ENCODE measurements at regions of chr1 and their contacts with region 1.

Region 1: DNA sequence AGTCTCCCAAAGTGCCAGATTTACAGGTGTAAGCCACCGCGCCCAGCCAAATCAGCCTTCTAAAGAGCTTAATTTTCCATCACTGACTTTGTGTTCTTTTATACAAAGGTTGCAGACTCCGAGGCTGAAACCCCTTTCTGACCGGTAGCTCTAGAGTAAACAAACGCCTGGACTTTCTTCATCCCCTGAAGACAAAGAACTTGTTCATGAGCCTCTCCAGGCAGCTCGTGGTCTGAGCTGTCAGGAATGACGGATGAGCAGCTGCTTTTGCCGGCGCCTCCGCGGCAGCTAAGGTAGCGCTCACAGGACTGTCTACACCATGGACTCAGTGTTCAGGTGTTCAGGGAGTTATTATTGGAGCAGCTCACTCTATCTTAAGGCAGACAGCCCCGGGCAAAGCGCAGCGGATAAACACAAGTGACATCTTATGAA is 128.5 kb upstream of the ERRFI1 start:
- DNase-seq: peak; percentile 99
- ATAC-seq: peak; percentile 97
- H3K4me3 ChIP-seq: peak overlapping the region in 2 of 3 experiments; percentile 15 to 31; a peak in 2 of 6 replicates
- H3K27ac ChIP-seq: peak overlapping the region; percentile 88
- H3K4me1 ChIP-seq: peaks cover 82% of the 10 kb centered on the region
- H3K27me3 ChIP-seq: no peaks in the 10 kb centered on the region
- CTCF ChIP-seq: no peak
- EP300 ChIP-seq: peak; percentile 89 to 97; a peak in 3 of 4 replicates
- POLR2A ChIP-seq: peak in 1 of 2 experiments; percentile 16; a peak in 1 of 4 replicates
- RAD21 ChIP-seq: peak; percentile 44; the same call in 1 of the 2 replicates

Region 2: DNA sequence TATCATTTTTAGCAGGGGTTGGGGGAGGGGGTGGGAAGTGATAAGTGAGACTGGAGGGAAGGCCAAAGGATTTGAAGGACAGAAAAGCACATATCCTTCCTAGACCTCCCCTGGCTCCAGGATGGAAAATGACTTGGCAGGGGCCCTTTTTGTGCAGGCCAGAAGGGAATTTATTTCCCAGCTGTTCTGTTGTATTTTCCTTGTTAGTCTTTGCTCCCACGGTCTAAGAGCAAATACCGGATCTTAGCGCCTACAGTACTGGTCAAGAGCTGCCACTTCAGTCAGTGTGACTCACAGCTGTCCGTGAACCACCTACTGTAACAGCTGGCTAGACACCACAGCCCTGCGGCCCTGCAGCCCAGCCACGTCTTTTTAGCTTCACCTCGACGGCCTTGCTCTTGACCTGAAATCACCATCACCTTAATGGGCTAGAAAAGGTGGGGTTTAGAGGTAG is 77.5 kb before region 1 on chr1:
- CTCF ChIA-PET with region 1: no interaction called
- POLR2A ChIA-PET with region 1: interaction called, 14 read pairs
- in situ Hi-C with region 1: no loop called
- intact Hi-C with region 1: no loop called
- DNase-seq: peak; percentile 93
- ATAC-seq: peak; percentile 99
- H3K4me3 ChIP-seq: peak overlapping the region; percentile 36 to 50 (median 47); a peak in 5 of 6 replicates
- H3K27ac ChIP-seq: peak overlapping the region; percentile 57
- H3K4me1 ChIP-seq: peaks cover 89% of the 10 kb centered on the region
- H3K27me3 ChIP-seq: no peaks in the 10 kb centered on the region
- CTCF ChIP-seq: 0 out of 2 replicates have a peak, but pooled peaks have one; percentile 10
- EP300 ChIP-seq: peak in 1 of 2 experiments; percentile 62; a peak in 2 of 4 replicates
- POLR2A ChIP-seq: peak; percentile 22 to 55; a peak in 1 of 4 replicates
- RAD21 ChIP-seq: peak; percentile 26; the same call in 1 of the 2 replicates

Region 3: DNA sequence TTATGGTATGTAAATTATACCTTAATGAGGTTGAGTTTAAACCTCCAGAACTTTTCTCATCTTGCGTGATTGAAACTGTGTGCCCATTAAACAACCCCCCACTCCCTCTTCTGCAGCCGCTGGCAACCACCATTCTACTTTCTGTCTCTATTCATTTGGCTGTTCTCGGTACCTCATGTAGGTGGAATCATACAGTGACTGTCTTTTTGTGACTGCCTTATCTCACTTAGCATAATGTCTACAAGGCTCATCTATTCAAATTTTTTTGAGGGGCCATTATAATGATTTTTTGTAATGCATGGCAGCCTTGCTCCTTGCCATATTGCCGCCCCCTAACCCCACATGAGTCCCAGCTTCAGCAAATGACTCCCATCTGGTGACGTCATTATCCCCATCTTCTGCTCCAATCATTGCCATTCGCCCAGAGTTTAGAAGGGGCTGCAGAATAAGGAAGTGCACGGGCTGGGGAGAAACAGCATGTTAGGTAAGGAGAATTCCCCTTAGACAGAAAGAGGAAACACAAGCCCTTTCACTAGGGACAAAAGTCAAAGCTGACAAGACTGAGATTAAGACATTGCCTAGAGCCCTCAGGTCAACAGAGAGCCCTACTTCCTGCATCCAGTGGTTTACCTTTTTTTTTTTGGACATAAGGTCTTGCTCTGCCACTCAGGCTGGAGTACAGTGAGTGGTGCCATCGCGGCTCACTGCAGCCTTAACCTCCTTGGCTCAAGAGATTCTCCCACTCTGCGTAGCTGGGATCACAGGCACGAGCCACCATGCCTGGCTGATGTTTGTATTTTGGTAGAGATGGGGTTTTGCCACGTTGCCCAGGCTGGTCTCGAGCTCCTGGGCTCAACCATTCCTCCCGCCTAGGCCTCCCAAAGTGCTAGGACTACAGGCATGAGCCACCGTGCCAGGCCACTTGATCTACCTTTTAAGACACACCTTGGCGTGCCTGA is 50.1 kb before region 1 on chr1:
- CTCF ChIA-PET with region 1: no interaction called
- POLR2A ChIA-PET with region 1: no interaction called
- in situ Hi-C with region 1: no loop called
- intact Hi-C with region 1: no loop called
- DNase-seq: no peak
- ATAC-seq: no peak
- H3K4me3 ChIP-seq: no peak overlapping the region
- H3K27ac ChIP-seq: no peak overlapping the region
- H3K4me1 ChIP-seq: no peaks in the 10 kb centered on the region
- H3K27me3 ChIP-seq: no peaks in the 10 kb centered on the region
- CTCF ChIP-seq: no peak
- EP300 ChIP-seq: no peak
- POLR2A ChIP-seq: no peak
- RAD21 ChIP-seq: no peak

Region 4: GRCh38 chr1:8137481-8138244 is 17.0 kb before region 1 on chr1:
- CTCF ChIA-PET with region 1: no interaction called
- POLR2A ChIA-PET with region 1: interaction called, 27 read pairs
- in situ Hi-C with region 1: no loop called
- intact Hi-C with region 1: no loop called
- DNase-seq: peak; percentile 68
- ATAC-seq: peak; percentile 47; the same call in 1 of the 3 replicates
- H3K4me3 ChIP-seq: peak overlapping the region in 1 of 3 experiments; percentile 32; a peak in 2 of 6 replicates
- H3K27ac ChIP-seq: peak overlapping the region; percentile 30
- H3K4me1 ChIP-seq: peaks cover 74% of the 10 kb centered on the region
- H3K27me3 ChIP-seq: no peaks in the 10 kb centered on the region
- CTCF ChIP-seq: no peak
- EP300 ChIP-seq: peak in 1 of 2 experiments; percentile 27; a peak in 1 of 4 replicates
- POLR2A ChIP-seq: no peak
- RAD21 ChIP-seq: no peak

Region 5: DNA sequence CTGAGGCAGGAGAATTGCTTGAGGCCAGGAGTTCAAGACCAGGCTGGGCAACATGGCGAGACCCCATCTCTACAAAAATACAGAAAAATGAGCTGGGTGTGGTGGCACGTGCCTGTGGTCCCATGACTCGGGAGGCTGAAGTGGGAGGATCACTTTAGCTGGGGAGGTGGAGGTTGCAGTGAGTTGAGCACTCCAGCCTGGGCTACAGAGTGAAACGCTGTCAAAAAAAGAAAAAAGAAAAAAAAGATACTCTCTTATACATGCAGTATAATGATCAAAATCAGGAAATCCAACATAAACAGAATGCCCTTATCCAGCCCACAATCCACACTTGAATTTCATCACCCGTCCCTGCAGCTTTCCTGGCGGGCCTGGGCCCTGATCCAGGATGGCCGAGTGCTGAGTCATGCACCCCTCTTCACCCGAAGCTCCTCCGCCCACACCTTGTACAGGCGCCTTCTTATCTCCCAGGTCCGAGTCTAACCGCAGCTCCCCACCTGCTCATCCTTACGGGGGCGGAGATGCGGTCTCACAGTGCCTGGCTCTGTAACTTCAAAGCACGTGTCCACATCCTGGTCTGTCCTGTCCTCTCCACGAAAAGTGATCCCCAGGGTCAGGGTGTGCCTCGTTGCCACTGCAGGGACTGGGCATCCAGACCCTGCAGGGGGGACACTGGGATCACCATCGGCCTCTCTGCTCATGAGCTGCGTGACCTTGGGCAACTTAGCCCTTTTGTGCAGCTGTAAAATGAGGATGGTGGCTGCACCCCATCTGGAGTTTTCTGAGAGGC is 43.1 kb after region 1 on chr1:
- CTCF ChIA-PET with region 1: no interaction called
- POLR2A ChIA-PET with region 1: interaction called, 20 read pairs
- in situ Hi-C with region 1: no loop called
- intact Hi-C with region 1: no loop called
- DNase-seq: peak; percentile 83
- ATAC-seq: peak; percentile 35
- H3K4me3 ChIP-seq: no peak overlapping the region
- H3K27ac ChIP-seq: peak overlapping the region; percentile 61
- H3K4me1 ChIP-seq: peaks cover 91% of the 10 kb centered on the region
- H3K27me3 ChIP-seq: no peaks in the 10 kb centered on the region
- CTCF ChIP-seq: 0 out of 2 replicates have a peak, but pooled peaks have one; percentile 3
- EP300 ChIP-seq: peak; percentile 71 to 95; a peak in 3 of 4 replicates
- POLR2A ChIP-seq: no peak
- RAD21 ChIP-seq: no peak

Region 6: DNA sequence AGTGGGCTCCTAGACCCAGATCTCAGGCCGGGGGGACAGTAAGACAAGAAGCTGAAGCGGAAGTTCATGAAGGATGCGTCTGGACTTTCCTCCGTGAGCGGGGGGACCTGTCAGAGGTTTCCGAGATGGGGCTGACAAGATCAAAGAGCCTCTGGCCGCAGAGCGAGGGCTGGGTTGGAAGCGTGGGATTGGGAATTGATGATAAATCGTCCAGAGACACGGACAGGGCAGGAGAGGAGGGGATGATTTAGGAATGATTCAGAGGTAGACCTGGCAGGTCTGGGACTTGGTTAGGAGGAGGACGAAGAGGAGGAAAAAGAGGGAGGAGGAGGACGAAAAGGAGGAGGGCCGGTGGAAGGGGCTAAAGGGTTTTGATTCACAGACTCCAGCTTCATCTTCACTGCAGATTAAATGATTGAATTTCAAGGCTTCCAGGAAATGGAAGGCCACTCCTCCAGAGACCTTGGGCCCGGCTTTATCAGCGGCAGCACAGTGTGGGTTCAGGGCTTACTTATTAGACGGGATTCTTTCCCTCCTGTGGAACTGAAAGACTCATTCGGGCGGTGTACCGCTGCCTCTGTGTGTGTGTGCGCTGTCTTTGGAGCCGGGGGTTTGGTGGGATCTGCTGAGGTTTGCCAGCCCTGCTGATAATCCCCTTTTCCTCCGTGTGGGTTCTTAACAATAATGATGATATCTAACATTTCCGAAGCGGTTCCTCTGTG is 77.6 kb after region 1 on chr1:
- CTCF ChIA-PET with region 1: no interaction called
- POLR2A ChIA-PET with region 1: no interaction called
- in situ Hi-C with region 1: no loop called
- intact Hi-C with region 1: no loop called
- DNase-seq: no peak
- ATAC-seq: peak; percentile 62
- H3K4me3 ChIP-seq: no peak overlapping the region
- H3K27ac ChIP-seq: no peak overlapping the region
- H3K4me1 ChIP-seq: peaks cover 49% of the 10 kb centered on the region
- H3K27me3 ChIP-seq: no peaks in the 10 kb centered on the region
- CTCF ChIP-seq: no peak
- EP300 ChIP-seq: no peak
- POLR2A ChIP-seq: no peak
- RAD21 ChIP-seq: no peak

Region 7: GRCh38 chr1:8259498-8260290 is 105.1 kb after region 1 on chr1:
- CTCF ChIA-PET with region 1: no interaction called
- POLR2A ChIA-PET with region 1: interaction called, 10 read pairs
- in situ Hi-C with region 1: no loop called
- intact Hi-C with region 1: no loop called
- DNase-seq: peak; percentile 89
- ATAC-seq: peak; percentile 69
- H3K4me3 ChIP-seq: peak overlapping the region; percentile 31 to 53 (median 32)
- H3K27ac ChIP-seq: peak overlapping the region; percentile 91
- H3K4me1 ChIP-seq: peaks cover 74% of the 10 kb centered on the region
- H3K27me3 ChIP-seq: no peaks in the 10 kb centered on the region
- CTCF ChIP-seq: no peak
- EP300 ChIP-seq: peak; percentile 24 to 89; a peak in 3 of 4 replicates
- POLR2A ChIP-seq: no peak
- RAD21 ChIP-seq: no peak

Measured in HepG2 (cell line).